H1 (cell line): ENCODE measurements at regions of chr7 and their contacts with region 1.

Region 1: GRCh38 chr7:100852048-100852872 is at the start of gene SLC12A9:
- DNase-seq: peak in 1 of 2 experiments; percentile 99
- H3K4me3 ChIP-seq: peak within 1 kb of the TSS; percentile 50 to 95 (median 75)
- H3K27ac ChIP-seq: peak within 1 kb of the TSS; percentile 17; the same call in 1 of the 2 replicates
- H3K4me1 ChIP-seq: peaks cover 0 to 6% (median 0%) of the 10 kb centered on the region in 4 experiments; a peak in 1 of 7 replicates
- H3K27me3 ChIP-seq: no peaks in the 10 kb centered on the region
- CTCF ChIP-seq: peak in 2 of 3 experiments; percentile 91 to 92; a peak in 3 of 4 replicates
- EP300 ChIP-seq: no peak
- POLR2A ChIP-seq: peak in 1 of 2 experiments; percentile 15; a peak in 1 of 3 replicates
- RAD21 ChIP-seq: peak; percentile 98
- total RNA-seq, gene SLC12A9: 40.1 and 40.7 TPM in 2 replicates

Region 2: GRCh38 chr7:100705753-100706671 is 146.2 kb before region 1 on chr7 and contains the start of gene POP7:
- CTCF ChIA-PET with region 1: interaction called, 26 read pairs
- POLR2A ChIA-PET with region 1: interaction called, 3 read pairs
- DNase-seq: peak; percentile 94 to 99
- H3K4me3 ChIP-seq: peak within 1 kb of the TSS; percentile 83 to 94 (median 90)
- H3K27ac ChIP-seq: peak within 1 kb of the TSS; percentile 86
- H3K4me1 ChIP-seq: peaks cover 0 to 11% (median 2%) of the 10 kb centered on the region in 4 experiments; a peak in 3 of 7 replicates
- H3K27me3 ChIP-seq: no peaks in the 10 kb centered on the region
- CTCF ChIP-seq: no peak
- EP300 ChIP-seq: peak in 1 of 2 experiments; percentile 54; a peak in 1 of 3 replicates
- POLR2A ChIP-seq: peak; percentile 79 to 81
- RAD21 ChIP-seq: no peak
- total RNA-seq, gene POP7: 92.5 and 96.7 TPM in 2 replicates

Region 3: DNA sequence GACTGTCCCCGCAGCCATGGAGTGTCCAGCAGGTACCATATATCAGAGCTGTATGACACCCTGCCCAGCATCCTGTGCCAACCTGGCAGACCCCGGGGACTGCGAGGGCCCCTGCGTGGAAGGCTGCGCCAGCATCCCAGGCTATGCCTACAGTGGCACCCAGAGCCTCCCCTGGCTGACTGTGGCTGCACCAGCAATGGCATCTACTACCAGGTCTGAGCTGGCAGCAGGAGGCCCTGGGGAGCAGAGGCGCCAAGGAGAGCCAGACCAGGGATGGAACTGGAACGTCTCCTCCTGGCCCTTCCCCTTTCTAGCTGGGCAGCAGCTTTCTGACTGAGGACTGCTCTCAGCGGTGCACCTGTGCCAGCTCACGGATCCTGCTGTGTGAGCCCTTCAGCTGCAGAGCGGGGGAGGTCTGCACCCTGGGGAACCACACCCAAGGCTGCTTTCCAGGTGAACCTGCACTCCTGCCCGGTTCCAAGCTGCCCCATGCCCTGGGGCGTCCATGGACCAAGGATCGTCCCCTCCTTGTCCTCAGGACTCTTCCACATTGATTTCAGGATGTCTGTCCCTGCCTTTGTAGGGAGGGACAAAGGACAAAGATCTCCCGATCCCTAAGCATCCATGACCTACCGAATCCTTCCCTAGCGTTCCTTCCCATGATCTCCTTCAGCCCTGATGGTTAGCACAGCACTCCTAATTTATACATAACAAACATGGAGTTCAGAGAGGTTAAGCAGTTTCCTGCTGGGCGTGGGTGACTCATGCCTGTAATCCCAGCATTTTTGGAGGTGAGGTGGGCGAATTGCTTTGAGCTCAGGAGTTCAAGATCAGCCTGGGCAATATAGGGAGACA is 58.2 kb before region 1 on chr7:
- CTCF ChIA-PET with region 1: interaction called, 215 read pairs
- POLR2A ChIA-PET with region 1: interaction called, 21 read pairs
- DNase-seq: no peak
- H3K4me3 ChIP-seq: no peak overlapping the region
- H3K27ac ChIP-seq: no peak overlapping the region
- H3K4me1 ChIP-seq: peaks cover 0 to 11% (median 6%) of the 10 kb centered on the region in 4 experiments; a peak in 6 of 7 replicates
- H3K27me3 ChIP-seq: no peaks in the 10 kb centered on the region
- CTCF ChIP-seq: no peak
- EP300 ChIP-seq: no peak
- POLR2A ChIP-seq: no peak
- RAD21 ChIP-seq: no peak

Region 4: GRCh38 chr7:100827330-100828227 is 24.7 kb before region 1 on chr7 and contains the start of gene EPHB4:
- CTCF ChIA-PET with region 1: interaction called, 65 read pairs
- POLR2A ChIA-PET with region 1: interaction called, 52 read pairs
- DNase-seq: peak in 1 of 2 experiments; percentile 93
- H3K4me3 ChIP-seq: peak within 1 kb of the TSS; percentile 88 to 100 (median 92)
- H3K27ac ChIP-seq: peak within 1 kb of the TSS; percentile 81
- H3K4me1 ChIP-seq: peaks cover 0 to 13% (median 10%) of the 10 kb centered on the region in 4 experiments; a peak in 6 of 7 replicates
- H3K27me3 ChIP-seq: no peaks in the 10 kb centered on the region
- CTCF ChIP-seq: peak; percentile 55 to 63 (median 61)
- EP300 ChIP-seq: no peak
- POLR2A ChIP-seq: peak in 1 of 2 experiments; percentile 30; a peak in 1 of 3 replicates
- RAD21 ChIP-seq: peak; percentile 30 to 60; a peak in 3 of 4 replicates
- total RNA-seq, gene EPHB4: 113 and 122 TPM in 2 replicates

Region 5: GRCh38 chr7:100867040-100867775 is 14.9 kb after region 1 on chr7 and contains the start of gene TRIP6:
- CTCF ChIA-PET with region 1: interaction called, 8 read pairs
- POLR2A ChIA-PET with region 1: interaction called, 21 read pairs
- DNase-seq: peak; percentile 64 to 97
- H3K4me3 ChIP-seq: peak within 1 kb of the TSS; percentile 68 to 93 (median 83)
- H3K27ac ChIP-seq: peak within 1 kb of the TSS; percentile 94
- H3K4me1 ChIP-seq: peaks cover 2 to 16% (median 11%) of the 10 kb centered on the region in 4 experiments
- H3K27me3 ChIP-seq: no peaks in the 10 kb centered on the region
- CTCF ChIP-seq: no peak
- EP300 ChIP-seq: peak in 1 of 2 experiments; percentile 73; a peak in 1 of 3 replicates
- POLR2A ChIP-seq: peak in 1 of 2 experiments; percentile 73; a peak in 2 of 3 replicates
- RAD21 ChIP-seq: no peak
- total RNA-seq, gene TRIP6: 103 and 109 TPM in 2 replicates